Activated B cell treated with CpG ODN at 0.5 μM for 24 hours (primary cell): ENCODE measurements at regions of chr13 and their contacts with region 1.

Region 1: GRCh38 chr13:23966691-23967615 is 69.7 kb upstream of the C1QTNF9B start:
- DNase-seq: no peak
- ATAC-seq: no peak
- H3K4me3 Mint-ChIP-seq: peak overlapping the region; percentile 25
- H3K27ac Mint-ChIP-seq: no peak overlapping the region
- H3K4me1 Mint-ChIP-seq: peaks cover 4% of the 10 kb centered on the region
- H3K27me3 Mint-ChIP-seq: no peaks in the 10 kb centered on the region
- CTCF ChIP-seq: no peak

Region 2: DNA sequence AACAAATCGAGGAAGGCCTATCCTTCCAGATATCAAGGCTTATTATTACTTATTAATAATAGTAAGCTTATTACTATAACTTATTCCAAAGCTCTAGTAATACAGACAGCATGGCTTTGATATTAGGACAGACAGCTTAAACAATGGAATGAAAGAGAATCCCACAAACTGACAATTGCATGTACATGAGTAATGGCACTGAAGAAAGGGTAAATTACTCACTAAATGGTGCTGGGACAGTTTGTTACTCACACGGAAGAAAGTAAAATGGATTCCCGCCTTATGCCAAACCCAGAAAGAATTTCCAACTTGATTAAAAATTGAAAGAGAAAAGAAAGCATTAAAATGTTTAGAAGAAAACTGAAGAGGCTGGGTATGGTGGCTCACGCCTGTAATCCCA is 138.1 kb before region 1 on chr13:
- CTCF ChIA-PET with region 1: no interaction called
- POLR2A ChIA-PET with region 1: no interaction called
- intact Hi-C with region 1: no loop called
- DNase-seq: no peak
- ATAC-seq: no peak
- H3K4me3 Mint-ChIP-seq: no peak overlapping the region
- H3K27ac Mint-ChIP-seq: no peak overlapping the region
- H3K4me1 Mint-ChIP-seq: peaks cover 2% of the 10 kb centered on the region
- H3K27me3 Mint-ChIP-seq: no peaks in the 10 kb centered on the region
- CTCF ChIP-seq: no peak

Region 3: GRCh38 chr13:23992781-23993679 is 26.1 kb after region 1 on chr13:
- CTCF ChIA-PET with region 1: no interaction called
- POLR2A ChIA-PET with region 1: no interaction called
- intact Hi-C with region 1: loop called (anchors 1 kb)
- DNase-seq: no peak
- ATAC-seq: no peak
- H3K4me3 Mint-ChIP-seq: no peak overlapping the region
- H3K27ac Mint-ChIP-seq: no peak overlapping the region
- H3K4me1 Mint-ChIP-seq: no peaks in the 10 kb centered on the region
- H3K27me3 Mint-ChIP-seq: peaks cover 24% of the 10 kb centered on the region
- CTCF ChIP-seq: no peak

Region 4: GRCh38 chr13:25253687-25254086 is 1286.7 kb after region 1 on chr13:
- CTCF ChIA-PET with region 1: no interaction called
- POLR2A ChIA-PET with region 1: no interaction called
- intact Hi-C with region 1: no loop called
- DNase-seq: no peak
- ATAC-seq: no peak
- H3K4me3 Mint-ChIP-seq: no peak overlapping the region
- H3K27ac Mint-ChIP-seq: no peak overlapping the region
- H3K4me1 Mint-ChIP-seq: peaks cover 4% of the 10 kb centered on the region
- H3K27me3 Mint-ChIP-seq: no peaks in the 10 kb centered on the region
- CTCF ChIP-seq: no peak